Activated CD4-positive, alpha-beta T cell treated with anti-CD3 and anti-CD28 coated beads, Interleukin-2, amount 10 ng/mL, durations not matched to agents 24 days and 14 days (primary cell): ENCODE measurements at regions of chrX and their contacts with region 1.

Region 1: DNA sequence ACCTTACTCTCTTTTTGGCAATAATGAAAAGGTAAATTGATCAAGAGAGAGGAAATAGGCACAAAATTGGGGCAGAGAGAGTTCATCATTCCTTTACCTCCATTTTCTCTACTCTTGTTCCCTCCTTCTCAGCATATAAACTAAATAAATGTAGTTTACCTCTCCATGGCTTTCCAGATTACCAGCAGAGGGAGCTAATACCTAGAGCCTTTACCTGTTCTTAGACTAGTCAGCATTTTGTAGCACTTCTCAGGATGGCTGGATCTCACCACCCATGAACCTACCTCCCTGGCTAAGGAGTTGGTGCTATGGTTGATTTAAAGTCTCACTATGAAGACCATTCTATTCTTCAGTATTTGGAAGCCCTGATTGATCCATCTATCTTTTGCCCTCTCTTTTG is 15.7 kb downstream of the OFD1 start:
- DNase-seq: peak; percentile 69
- H3K4me3 Mint-ChIP-seq: no peak overlapping the region
- H3K27ac Mint-ChIP-seq: no peak overlapping the region
- H3K4me1 Mint-ChIP-seq: peaks cover 17% of the 10 kb centered on the region
- H3K27me3 Mint-ChIP-seq: no peaks in the 10 kb centered on the region

Region 2: GRCh38 chrX:13452283-13452682 is 297.9 kb before region 1 on chrX:
- intact Hi-C with region 1: no loop called
- DNase-seq: no peak
- H3K4me3 Mint-ChIP-seq: no peak overlapping the region
- H3K27ac Mint-ChIP-seq: no peak overlapping the region
- H3K4me1 Mint-ChIP-seq: no peaks in the 10 kb centered on the region
- H3K27me3 Mint-ChIP-seq: no peaks in the 10 kb centered on the region

Region 3: GRCh38 chrX:13506574-13506973 is 243.6 kb before region 1 on chrX:
- intact Hi-C with region 1: loop called (anchors 5 kb)
- DNase-seq: peak; percentile 81
- H3K4me3 Mint-ChIP-seq: no peak overlapping the region
- H3K27ac Mint-ChIP-seq: no peak overlapping the region
- H3K4me1 Mint-ChIP-seq: peaks cover 4% of the 10 kb centered on the region
- H3K27me3 Mint-ChIP-seq: no peaks in the 10 kb centered on the region

Region 4: DNA sequence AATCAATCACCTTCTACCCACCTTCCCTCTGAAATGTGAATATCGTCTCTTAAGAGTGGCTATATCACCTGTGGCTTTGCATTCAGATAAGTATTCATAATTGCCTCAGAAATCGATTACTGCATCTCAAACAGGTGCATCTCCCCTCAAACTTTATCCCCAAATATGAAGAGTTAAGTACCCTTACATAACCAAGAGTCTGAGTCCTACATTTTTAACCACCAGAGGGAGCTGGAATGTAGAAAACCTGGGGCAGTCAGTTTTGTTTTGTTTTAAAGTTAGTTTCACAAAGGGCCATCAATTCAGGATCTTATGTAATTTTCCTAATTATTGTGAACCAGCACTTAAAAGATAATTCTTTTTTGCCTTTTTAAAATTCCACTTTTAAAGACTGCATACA is 91.6 kb before region 1 on chrX:
- intact Hi-C with region 1: loop called (anchors 1 kb)
- DNase-seq: peak; percentile 73
- H3K4me3 Mint-ChIP-seq: no peak overlapping the region
- H3K27ac Mint-ChIP-seq: peak overlapping the region; percentile 15
- H3K4me1 Mint-ChIP-seq: peaks cover 17% of the 10 kb centered on the region
- H3K27me3 Mint-ChIP-seq: no peaks in the 10 kb centered on the region

Region 5: GRCh38 chrX:13923845-13924244 is 173.6 kb after region 1 on chrX:
- intact Hi-C with region 1: no loop called
- DNase-seq: no peak
- H3K4me3 Mint-ChIP-seq: no peak overlapping the region
- H3K27ac Mint-ChIP-seq: no peak overlapping the region
- H3K4me1 Mint-ChIP-seq: no peaks in the 10 kb centered on the region
- H3K27me3 Mint-ChIP-seq: no peaks in the 10 kb centered on the region